HEK293 (cell line): ENCODE measurements at regions of chr22 and their contacts with region 1.

Region 1: GRCh38 chr22:31646186-31647089 is 15.6 kb downstream of the PISD start:
- H3K4me3 ChIP-seq: no peak overlapping the region
- H3K27ac ChIP-seq: peak overlapping the region; percentile 39
- H3K4me1 ChIP-seq: peaks cover 8% of the 10 kb centered on the region
- CTCF ChIP-seq: no peak

Region 2: DNA sequence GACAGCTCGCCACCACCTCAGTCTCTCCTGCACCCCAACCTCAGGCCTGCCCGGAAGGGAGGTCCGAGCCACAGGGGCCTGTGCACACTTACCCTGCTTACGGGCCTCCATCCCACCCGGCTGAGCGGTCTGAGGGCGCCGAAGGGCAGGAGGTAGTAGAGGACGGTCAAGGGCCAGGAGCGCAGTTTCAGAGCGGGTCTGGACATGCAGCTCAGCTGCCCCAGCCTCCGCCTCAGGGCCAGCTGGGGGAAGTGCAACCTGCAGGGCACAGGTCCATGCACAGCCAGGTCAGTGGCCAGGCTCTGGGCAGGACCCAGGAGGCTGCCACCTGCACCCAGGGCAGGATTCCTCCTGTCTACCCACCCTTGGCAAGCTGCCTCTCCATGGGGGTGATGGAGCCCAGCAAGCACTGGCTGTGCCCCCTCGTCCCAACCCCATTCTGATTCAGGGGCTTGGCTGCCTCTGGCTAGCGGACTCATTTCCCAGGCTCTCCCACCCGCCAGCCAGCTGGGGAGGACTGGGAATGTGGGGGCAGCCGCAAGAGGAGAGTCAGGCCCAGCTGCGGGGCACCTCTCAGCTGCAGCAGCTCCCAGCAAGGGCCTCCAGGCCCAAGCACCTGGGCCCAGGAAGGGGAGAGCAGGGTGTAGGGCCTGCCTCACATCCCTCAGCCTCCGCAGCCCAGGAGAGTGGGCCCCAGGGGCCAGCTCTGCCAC is 22.7 kb before region 1 on chr22:
- CTCF ChIA-PET with region 1: no interaction called
- POLR2A ChIA-PET with region 1: interaction called, 12 read pairs
- H3K4me3 ChIP-seq: no peak overlapping the region
- H3K27ac ChIP-seq: 0 out of 2 replicates have a peak overlapping the region, but pooled peaks have one; percentile 5
- H3K4me1 ChIP-seq: no peaks in the 10 kb centered on the region
- CTCF ChIP-seq: no peak

Region 3: DNA sequence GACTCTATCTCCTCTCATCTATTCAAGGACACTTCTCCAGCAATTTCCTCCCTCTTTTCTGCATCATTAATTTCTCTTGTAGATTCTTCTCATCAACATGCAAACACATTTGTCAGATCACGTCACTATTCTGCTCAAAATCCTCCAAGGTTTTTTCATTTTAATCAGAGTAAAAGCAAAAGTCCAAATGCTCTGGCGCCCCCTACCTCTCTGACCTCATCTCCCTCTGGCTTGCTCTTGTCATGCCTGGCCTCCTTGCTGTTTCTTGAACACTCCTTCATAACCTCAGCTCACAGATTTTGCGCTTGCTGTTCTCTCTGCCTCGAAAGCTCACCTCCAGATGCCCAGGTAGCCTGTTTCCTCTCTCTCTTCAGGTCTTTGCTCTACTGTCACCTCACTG is 743.2 kb after region 1 on chr22:
- CTCF ChIA-PET with region 1: interaction called, 10 read pairs
- POLR2A ChIA-PET with region 1: no interaction called
- H3K4me3 ChIP-seq: no peak overlapping the region
- H3K27ac ChIP-seq: no peak overlapping the region
- H3K4me1 ChIP-seq: no peaks in the 10 kb centered on the region
- CTCF ChIP-seq: peak; percentile 49